ENCODE measurements at regions of chr5 and their contacts with region 1.

Region 1: DNA sequence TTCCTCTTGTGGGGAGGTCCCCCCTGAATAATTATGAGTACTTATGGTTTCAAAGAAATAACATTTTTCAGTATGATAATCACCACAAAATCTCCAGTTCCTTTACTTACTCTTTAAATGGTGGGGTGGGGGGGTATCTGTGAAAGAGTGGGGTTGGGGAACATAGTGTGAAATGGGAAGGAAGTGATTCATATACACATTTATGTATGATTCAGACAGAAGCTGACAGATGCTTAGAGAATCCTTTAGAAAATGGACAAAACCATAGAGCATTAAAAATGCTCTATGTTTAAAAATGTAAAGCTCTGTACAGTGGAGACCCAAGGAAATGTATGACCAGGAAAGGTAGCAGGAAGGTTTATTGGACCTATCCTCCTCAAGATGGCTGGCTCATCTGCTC is 267.5 kb upstream of the GRIA1 start:
- DNase-seq: no peak
- H3K4me3 ChIP-seq: no peak overlapping the region
- H3K27ac ChIP-seq: no peak overlapping the region
- H3K4me1 ChIP-seq: no peaks in the 10 kb centered on the region
- H3K27me3 ChIP-seq: no peaks in the 10 kb centered on the region
- CTCF ChIP-seq: no peak
- POLR2A ChIP-seq: no peak

Region 2: DNA sequence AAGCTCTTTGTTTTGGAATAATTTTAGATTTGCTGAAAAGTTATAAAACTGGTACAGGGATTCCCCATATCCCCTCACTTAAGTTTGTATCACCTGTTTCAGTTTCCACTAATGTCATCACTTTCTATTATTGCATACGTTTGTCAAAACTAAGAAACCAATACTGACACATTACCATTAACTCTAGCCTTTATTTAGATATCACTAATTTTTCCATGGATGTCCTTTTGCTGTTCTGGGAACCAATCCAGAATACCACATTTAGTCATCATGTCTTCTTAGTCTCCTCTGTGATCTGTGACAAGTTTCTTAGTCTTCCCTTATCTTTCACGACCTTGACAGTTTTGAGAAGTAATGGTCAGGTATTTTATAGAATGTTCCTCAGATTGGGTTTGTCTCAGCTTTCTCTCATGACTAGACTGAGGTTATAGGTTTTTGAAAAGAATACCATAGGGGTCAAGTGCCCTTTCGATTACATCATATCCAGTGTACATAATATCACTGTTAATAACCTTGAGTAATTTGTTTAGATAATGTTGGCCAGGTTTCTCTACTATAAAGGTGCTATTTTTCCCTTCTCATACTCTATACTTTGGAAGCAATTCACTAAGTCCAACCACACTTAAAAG is 766.0 kb before region 1 on chr5:
- intact Hi-C with region 1: loop called (anchors 10 kb)
- DNase-seq: no peak
- H3K4me3 ChIP-seq: no peak overlapping the region
- H3K27ac ChIP-seq: no peak overlapping the region
- H3K4me1 ChIP-seq: no peaks in the 10 kb centered on the region
- H3K27me3 ChIP-seq: no peaks in the 10 kb centered on the region
- CTCF ChIP-seq: no peak
- POLR2A ChIP-seq: no peak

Region 3: DNA sequence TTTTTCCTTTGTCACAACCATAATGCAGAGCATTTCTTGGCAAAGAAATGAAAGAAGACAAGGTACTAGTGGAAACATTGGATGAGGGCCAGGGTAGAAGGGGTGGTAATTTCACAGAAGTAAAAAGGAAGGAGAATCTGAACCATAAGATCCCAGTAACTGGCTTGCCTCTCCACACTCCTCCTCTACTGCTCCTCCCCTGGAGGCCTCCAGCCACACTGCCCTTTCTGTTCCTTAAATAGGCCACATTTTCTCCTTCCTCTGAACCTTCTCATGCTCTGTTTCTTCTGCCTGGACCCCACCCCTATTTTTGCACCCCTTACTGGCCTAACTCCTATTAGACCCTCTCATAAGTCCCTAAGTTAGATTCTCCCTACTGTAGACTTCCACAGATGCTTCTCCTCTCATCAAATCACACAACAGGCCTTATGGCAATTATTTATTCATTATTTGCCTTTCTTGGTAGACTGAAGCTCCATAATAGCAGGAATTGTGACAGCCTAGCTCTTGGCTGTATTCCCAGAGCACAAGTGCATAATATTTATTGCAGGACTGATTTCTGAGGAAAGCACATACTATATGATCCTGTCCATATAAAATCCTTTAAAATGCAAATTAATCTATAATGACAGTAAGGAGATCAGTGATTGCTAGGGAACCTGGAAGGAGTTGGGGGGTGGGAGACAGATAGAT is 236.3 kb after region 1 on chr5:
- intact Hi-C with region 1: loop called (anchors 10 kb)
- DNase-seq: no peak
- H3K4me3 ChIP-seq: no peak overlapping the region
- H3K27ac ChIP-seq: no peak overlapping the region
- H3K4me1 ChIP-seq: no peaks in the 10 kb centered on the region
- H3K27me3 ChIP-seq: no peaks in the 10 kb centered on the region
- CTCF ChIP-seq: no peak
- POLR2A ChIP-seq: no peak